Activated CD8-positive, alpha-beta memory T cell treated with anti-CD3 and anti-CD28 coated beads, Interleukin-2, amount 10 ng/mL, durations not matched to agents 7 days and 5 days (primary cell): ENCODE measurements at regions of chr22 and their contacts with region 1.

Region 1: DNA sequence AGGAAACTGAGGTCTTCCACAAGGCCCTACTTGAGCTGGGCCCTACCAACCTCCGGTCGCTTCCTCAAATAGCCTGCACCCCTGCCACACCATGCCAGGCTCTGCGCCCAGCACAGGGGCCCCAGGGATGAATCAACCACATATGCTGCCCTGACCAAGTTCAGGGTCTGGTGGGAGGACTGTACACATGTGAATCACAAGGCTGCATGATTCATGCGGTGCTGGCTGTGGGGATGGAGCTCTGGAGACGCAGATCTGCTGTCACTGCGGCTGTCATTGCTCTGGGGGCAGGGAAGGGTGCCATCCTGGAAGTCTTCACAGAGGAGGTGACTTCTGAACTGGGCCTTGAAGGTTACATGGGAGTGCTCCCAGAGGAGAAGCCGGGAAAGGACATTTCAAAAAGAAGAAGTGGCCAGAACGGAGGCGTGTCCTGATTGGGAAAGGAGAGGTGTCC is 21.5 kb downstream of the CYTH4 start:
- DNase-seq: peak; percentile 89
- ATAC-seq: peak; percentile 45
- H3K4me3 Mint-ChIP-seq: peak overlapping the region; percentile 34
- H3K27ac Mint-ChIP-seq: peak overlapping the region; percentile 100
- H3K4me1 Mint-ChIP-seq: peaks cover 97% of the 10 kb centered on the region
- H3K27me3 Mint-ChIP-seq: no peaks in the 10 kb centered on the region

Region 2: GRCh38 chr22:37282385-37282677 is 21.5 kb before region 1 on chr22 and contains the start of gene CYTH4:
- CTCF ChIA-PET with region 1: interaction called, 10 read pairs
- DNase-seq: peak; percentile 90
- ATAC-seq: peak; percentile 90
- H3K4me3 Mint-ChIP-seq: peak within 1 kb of the TSS; percentile 100
- H3K27ac Mint-ChIP-seq: peak within 1 kb of the TSS; percentile 98
- H3K4me1 Mint-ChIP-seq: peaks cover 58% of the 10 kb centered on the region
- H3K27me3 Mint-ChIP-seq: no peaks in the 10 kb centered on the region
- total RNA-seq, gene CYTH4: 97.8 to 123 TPM